ENCODE measurements at regions of chr9 and their contacts with region 1.

Region 1: GRCh38 chr9:21110708-21111576 is 30.7 kb downstream of the IFNW1 start:
- DNase-seq: peak; percentile 35 to 56
- H3K4me3 ChIP-seq: no peak overlapping the region
- H3K4me3 Mint-ChIP-seq: no peak overlapping the region
- H3K27ac Mint-ChIP-seq: no peak overlapping the region
- H3K4me1 ChIP-seq: peaks cover 13% of the 10 kb centered on the region; the same call in 1 of the 2 replicates
- H3K4me1 Mint-ChIP-seq: peaks cover 7% of the 10 kb centered on the region
- H3K27me3 ChIP-seq: no peaks in the 10 kb centered on the region
- H3K27me3 Mint-ChIP-seq: no peaks in the 10 kb centered on the region
- CTCF ChIP-seq: peak; percentile 49 to 65

Region 2: GRCh38 chr9:20884985-20885593 is 225.9 kb before region 1 on chr9:
- CTCF ChIA-PET with region 1: interaction called, 3 read pairs
- POLR2A ChIA-PET with region 1: no interaction called
- intact Hi-C with region 1: loop called (anchors 1 kb)
- DNase-seq: peak; percentile 48 to 49
- H3K4me3 ChIP-seq: no peak overlapping the region
- H3K4me3 Mint-ChIP-seq: no peak overlapping the region
- H3K27ac Mint-ChIP-seq: no peak overlapping the region
- H3K4me1 ChIP-seq: no peaks in the 10 kb centered on the region
- H3K4me1 Mint-ChIP-seq: no peaks in the 10 kb centered on the region
- H3K27me3 ChIP-seq: no peaks in the 10 kb centered on the region
- H3K27me3 Mint-ChIP-seq: no peaks in the 10 kb centered on the region
- CTCF ChIP-seq: peak; percentile 31 to 68

Region 3: DNA sequence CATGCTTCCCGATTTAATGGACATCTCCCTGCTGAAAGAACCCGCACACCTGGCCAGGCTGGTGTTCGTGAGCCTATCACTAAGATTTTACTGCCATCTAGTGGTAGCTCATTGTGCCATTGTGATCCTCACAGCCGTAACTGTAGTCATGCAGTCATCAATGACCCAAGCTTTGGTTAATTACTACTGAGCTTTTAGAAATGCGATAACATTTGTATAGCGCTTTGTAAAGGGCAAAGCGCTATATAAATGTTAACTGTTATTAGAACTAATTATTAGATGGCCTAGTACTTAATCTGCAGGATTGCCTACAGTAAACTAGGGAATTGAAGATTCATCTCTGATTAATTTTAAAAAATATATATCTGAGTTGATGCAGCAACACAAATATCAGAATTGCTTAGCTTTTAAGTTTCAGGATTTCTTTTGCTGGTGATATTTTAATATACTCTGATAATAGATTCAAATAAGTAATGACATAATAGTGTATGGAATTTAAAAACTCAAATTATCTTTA is 169.7 kb before region 1 on chr9:
- CTCF ChIA-PET with region 1: interaction called, 13 read pairs
- POLR2A ChIA-PET with region 1: no interaction called
- intact Hi-C with region 1: loop called (anchors 1 kb)
- DNase-seq: peak; percentile 56 to 69
- H3K4me3 ChIP-seq: no peak overlapping the region
- H3K4me3 Mint-ChIP-seq: no peak overlapping the region
- H3K27ac Mint-ChIP-seq: no peak overlapping the region
- H3K4me1 ChIP-seq: 0 out of 2 replicates have a peak, but pooled peaks cover 4% of the 10 kb centered on the region
- H3K4me1 Mint-ChIP-seq: no peaks in the 10 kb centered on the region
- H3K27me3 ChIP-seq: no peaks in the 10 kb centered on the region
- H3K27me3 Mint-ChIP-seq: no peaks in the 10 kb centered on the region
- CTCF ChIP-seq: peak; percentile 55 to 71

Region 4: DNA sequence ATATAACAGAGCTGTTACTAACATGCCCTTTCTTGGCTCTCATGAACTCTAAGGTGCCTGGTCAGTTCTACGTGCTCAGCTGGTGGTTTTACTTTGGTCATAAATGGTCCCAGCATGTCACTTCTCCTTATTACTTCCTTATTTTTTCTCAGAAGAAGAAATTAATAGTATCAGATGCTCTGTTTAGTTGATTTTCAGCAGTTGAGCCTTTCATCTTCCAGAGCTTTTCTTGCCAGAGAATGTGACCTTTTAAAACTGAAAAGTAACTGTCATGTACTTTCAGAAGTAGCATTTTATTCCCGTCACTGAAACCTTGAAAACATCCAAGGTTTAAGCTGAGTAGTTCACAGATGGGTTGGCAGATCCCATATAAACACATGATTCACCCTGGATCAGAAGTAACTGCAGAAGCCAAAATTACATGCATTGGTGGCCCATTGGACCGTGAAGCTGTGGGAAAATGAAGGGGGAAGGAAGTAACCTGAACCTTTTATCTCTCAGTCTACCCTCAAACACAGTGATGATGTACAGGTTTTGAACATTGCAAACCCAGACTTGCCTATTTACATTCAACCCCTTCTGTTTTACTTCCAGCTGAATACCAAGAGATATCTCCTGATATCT is 130.0 kb before region 1 on chr9:
- CTCF ChIA-PET with region 1: no interaction called
- POLR2A ChIA-PET with region 1: no interaction called
- intact Hi-C with region 1: no loop called
- DNase-seq: no peak
- H3K4me3 ChIP-seq: no peak overlapping the region
- H3K4me3 Mint-ChIP-seq: no peak overlapping the region
- H3K27ac Mint-ChIP-seq: no peak overlapping the region
- H3K4me1 ChIP-seq: no peaks in the 10 kb centered on the region
- H3K4me1 Mint-ChIP-seq: no peaks in the 10 kb centered on the region
- H3K27me3 ChIP-seq: no peaks in the 10 kb centered on the region
- H3K27me3 Mint-ChIP-seq: no peaks in the 10 kb centered on the region
- CTCF ChIP-seq: no peak

Region 5: DNA sequence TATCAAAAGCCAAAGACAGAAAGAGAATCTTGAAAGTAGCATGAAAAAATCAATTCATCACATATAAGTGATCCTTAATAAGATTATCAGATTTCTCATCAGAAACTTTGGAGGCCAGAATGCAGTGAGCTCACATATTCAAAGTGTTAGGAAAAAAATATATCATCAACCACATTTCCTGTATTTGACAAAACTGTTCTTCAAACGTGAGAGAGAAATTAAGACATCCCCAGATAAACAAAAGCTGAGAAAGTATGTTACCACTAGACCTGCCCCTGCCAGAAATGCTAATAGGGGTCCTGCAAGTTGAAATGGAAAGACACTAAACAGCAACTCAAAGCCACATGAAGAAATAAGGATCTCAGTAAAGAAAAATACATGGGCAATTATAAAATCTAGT is 109.4 kb before region 1 on chr9:
- CTCF ChIA-PET with region 1: no interaction called
- POLR2A ChIA-PET with region 1: no interaction called
- intact Hi-C with region 1: loop called (anchors 10 kb)
- DNase-seq: no peak
- H3K4me3 ChIP-seq: no peak overlapping the region
- H3K4me3 Mint-ChIP-seq: no peak overlapping the region
- H3K27ac Mint-ChIP-seq: no peak overlapping the region
- H3K4me1 ChIP-seq: no peaks in the 10 kb centered on the region
- H3K4me1 Mint-ChIP-seq: no peaks in the 10 kb centered on the region
- H3K27me3 ChIP-seq: no peaks in the 10 kb centered on the region
- H3K27me3 Mint-ChIP-seq: no peaks in the 10 kb centered on the region
- CTCF ChIP-seq: no peak

Region 6: DNA sequence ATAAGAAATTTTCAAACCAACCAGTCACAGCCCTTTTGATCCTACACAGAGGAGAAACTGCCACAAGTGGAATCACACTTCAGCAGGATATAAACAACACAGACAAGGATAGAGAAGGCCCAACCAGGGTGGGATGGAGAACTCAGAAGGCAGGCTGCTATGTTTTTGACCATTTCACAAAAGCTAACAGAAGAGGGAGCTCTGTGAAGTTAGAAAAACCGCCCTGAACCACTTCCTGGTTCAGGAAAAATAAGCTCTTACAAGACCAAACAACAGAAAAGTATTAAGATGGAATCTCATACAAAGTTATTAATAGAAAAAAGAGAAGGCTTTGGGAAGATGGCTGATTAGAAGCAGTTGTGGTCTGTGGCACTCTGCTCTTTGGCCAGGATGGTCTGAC is 32.2 kb before region 1 on chr9:
- CTCF ChIA-PET with region 1: interaction called, 23 read pairs
- POLR2A ChIA-PET with region 1: no interaction called
- intact Hi-C with region 1: loop called (anchors 1 kb)
- DNase-seq: no peak
- H3K4me3 ChIP-seq: no peak overlapping the region
- H3K4me3 Mint-ChIP-seq: no peak overlapping the region
- H3K27ac Mint-ChIP-seq: no peak overlapping the region
- H3K4me1 ChIP-seq: no peaks in the 10 kb centered on the region
- H3K4me1 Mint-ChIP-seq: no peaks in the 10 kb centered on the region
- H3K27me3 ChIP-seq: no peaks in the 10 kb centered on the region
- H3K27me3 Mint-ChIP-seq: no peaks in the 10 kb centered on the region
- CTCF ChIP-seq: no peak

Measured in Caco-2 (cell line).